Heart right ventricle (tissue), 16 donors: ENCODE measurements at regions of chr11 and their contacts with region 1.

Region 1: DNA sequence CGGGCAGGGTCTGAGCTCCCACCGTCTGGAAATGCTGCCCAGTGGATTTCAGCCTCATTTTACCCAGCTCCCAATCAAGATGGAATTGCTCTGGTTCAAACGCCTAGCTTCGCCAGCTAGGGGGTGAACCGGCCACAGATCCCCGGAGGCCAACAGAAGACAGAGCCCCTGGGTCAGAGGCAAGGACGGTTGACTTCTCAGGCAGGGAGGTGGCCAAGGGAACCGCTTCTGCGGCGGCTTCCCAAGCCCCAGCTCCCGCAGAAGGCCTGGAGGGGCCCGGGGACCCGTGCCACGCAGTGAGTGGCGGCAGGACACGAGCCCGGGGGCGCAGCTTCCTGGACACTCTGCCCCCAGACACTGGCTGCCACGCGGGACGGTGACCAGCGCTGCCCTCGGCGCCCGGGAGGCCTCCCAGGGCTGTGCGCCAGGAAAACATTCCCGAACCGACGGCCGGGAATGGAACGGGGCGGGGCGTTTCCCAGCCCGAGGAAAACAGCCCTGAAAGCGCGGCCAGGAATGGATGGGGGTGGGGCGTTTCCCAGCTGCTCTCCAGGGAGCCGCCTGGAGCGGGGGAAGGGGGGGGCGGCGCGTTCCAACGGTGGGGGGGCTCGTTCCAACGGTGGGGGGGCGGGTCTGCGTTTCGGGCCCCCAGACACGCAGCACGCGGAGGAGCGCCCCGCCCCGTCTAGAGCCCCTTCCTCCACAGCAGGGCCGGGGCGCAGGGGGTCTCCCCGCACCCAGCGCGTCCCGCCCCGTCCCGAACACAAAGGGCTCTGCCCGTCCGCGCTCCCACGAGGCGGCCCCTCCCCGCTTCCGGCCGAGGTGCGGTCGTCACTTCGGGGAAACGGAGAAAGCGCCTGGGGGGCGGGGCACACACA is 13.5 kb upstream of the B4GALNT4 start:
- DNase-seq: peak; percentile 95 to 97
- ATAC-seq: peak; percentile 86 to 95 (median 92)
- H3K4me3 ChIP-seq: peak overlapping the region in 9 of 10 donors; percentile 28 to 52 (median 47)
- H3K27ac ChIP-seq: peak overlapping the region; percentile 93 to 100 (median 98)
- H3K4me1 ChIP-seq: peaks cover 5 to 45% (median 35%) of the 10 kb centered on the region in 9 donors
- H3K27me3 ChIP-seq: no peaks in the 10 kb centered on the region
- CTCF ChIP-seq: no peak

Region 2: DNA sequence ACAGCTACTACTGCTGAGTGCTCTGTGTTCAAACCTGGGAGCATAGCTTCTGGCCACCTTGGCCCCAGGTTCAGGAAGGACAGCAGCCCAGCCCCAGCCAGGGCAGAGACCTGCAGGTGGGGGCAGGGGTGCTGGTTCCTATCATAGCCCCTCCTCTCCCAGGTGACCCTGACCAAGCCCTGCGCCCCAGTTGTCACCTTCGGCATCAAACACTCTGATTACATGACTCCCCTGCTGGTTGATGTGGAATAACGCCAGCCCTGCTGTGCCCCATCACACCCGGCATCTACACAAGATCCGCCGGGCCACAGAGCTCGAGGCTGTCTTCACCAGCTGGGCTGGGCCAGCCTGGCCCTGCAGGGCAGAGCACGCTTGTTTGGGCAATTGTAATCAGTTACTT is 156.0 kb before region 1 on chr11:
- intact Hi-C with region 1: loop called in 3 of 10 experiments (anchors 5 to 10 kb)
- DNase-seq: no peak
- ATAC-seq: peak in 1 of 8 donors; percentile 21
- H3K4me3 ChIP-seq: no peak overlapping the region
- H3K27ac ChIP-seq: no peak overlapping the region
- H3K4me1 ChIP-seq: peaks cover 0 to 33% (median 5%) of the 10 kb centered on the region in 9 donors
- H3K27me3 ChIP-seq: no peaks in the 10 kb centered on the region
- CTCF ChIP-seq: no peak

Region 3: DNA sequence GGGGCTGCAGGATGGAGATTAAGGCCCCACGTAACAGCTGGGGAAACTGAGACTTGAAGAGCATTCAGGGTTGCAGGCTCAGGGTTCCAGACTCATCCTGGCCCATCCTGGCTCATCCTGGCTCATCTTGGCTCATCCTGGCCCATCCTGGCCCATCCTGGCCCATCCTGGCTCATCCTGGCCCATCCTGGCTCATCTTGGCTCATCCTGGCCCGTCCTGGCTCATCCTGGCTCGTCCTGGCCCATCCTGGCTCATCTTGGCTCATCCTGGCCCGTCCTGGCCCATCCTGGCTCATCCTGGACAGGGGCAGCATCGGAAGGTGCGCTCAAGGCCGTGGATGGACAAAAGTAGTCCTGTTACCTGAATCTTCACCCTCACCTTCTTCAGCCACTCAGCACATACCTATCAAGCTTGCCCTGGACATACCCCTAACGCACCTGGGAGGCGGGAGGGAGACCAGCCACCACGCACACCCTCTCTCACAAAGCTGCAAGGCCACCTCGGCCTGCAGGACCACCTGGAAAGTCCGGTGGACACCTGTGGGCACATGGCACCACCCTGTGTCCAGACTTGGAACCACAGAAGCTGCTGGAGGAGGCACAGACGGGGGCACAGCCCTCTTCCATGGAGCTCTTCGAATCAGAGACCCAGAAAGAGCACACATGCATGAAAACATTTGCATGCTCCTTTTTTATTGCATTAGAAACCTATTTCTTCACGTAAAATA is 97.9 kb before region 1 on chr11:
- intact Hi-C with region 1: loop called in 3 of 10 experiments (anchors 5 to 10 kb)
- DNase-seq: no peak
- ATAC-seq: peak in 1 of 8 donors; percentile 42
- H3K4me3 ChIP-seq: no peak overlapping the region
- H3K27ac ChIP-seq: no peak overlapping the region
- H3K4me1 ChIP-seq: no peaks in the 10 kb centered on the region
- H3K27me3 ChIP-seq: peaks cover 0 to 10% (median 0%) of the 10 kb centered on the region in 7 donors
- CTCF ChIP-seq: peak in 2 of 9 donors; percentile 14 to 20

Region 4: DNA sequence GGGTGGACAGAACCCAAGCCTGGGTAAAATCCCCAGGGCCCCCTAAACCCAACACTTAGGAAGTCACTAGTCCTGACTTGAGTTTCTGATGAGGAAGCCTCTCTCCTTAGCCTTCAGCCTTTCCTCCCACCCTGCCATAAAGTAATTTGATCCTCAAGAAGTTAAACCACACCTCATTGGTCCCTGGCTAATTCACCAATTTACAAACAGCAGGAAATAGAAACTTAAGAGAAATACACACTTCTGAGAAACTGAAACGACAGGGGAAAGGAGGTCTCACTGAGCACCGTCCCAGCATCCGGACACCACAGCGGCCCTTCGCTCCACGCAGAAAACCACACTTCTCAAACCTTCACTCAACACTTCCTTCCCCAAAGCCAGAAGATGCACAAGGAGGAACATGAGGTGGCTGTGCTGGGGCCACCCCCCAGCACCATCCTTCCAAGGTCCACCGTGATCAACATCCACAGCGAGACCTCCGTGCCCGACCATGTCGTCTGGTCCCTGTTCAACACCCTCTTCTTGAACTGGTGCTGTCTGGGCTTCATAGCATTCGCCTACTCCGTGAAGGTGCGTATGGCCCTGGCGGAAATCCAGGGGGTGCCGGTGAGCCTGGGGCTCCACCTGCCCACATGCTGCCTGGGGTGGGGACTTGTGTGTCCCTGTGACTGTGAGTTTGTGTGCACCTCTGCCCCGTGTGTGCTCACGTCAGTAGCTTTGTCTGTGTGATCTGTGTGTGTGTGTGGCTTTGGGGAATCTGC is 41.9 kb before region 1 on chr11 and contains the start of gene IFITM1:
- intact Hi-C with region 1: loop called in 7 of 10 experiments (anchors 2 to 10 kb)
- DNase-seq: peak; percentile 22 to 65
- ATAC-seq: peak; percentile 5 to 51 (median 29)
- H3K4me3 ChIP-seq: peak within 1 kb of the TSS; percentile 55 to 85 (median 75)
- H3K27ac ChIP-seq: peak within 1 kb of the TSS; percentile 83 to 99 (median 94)
- H3K4me1 ChIP-seq: peaks cover 6 to 60% (median 40%) of the 10 kb centered on the region in 9 donors
- H3K27me3 ChIP-seq: peaks cover 0 to 25% (median 12%) of the 10 kb centered on the region in 7 donors
- CTCF ChIP-seq: no peak
- total RNA-seq, gene IFITM1: 51.6 to 182 (median 94.9) TPM

Region 5: DNA sequence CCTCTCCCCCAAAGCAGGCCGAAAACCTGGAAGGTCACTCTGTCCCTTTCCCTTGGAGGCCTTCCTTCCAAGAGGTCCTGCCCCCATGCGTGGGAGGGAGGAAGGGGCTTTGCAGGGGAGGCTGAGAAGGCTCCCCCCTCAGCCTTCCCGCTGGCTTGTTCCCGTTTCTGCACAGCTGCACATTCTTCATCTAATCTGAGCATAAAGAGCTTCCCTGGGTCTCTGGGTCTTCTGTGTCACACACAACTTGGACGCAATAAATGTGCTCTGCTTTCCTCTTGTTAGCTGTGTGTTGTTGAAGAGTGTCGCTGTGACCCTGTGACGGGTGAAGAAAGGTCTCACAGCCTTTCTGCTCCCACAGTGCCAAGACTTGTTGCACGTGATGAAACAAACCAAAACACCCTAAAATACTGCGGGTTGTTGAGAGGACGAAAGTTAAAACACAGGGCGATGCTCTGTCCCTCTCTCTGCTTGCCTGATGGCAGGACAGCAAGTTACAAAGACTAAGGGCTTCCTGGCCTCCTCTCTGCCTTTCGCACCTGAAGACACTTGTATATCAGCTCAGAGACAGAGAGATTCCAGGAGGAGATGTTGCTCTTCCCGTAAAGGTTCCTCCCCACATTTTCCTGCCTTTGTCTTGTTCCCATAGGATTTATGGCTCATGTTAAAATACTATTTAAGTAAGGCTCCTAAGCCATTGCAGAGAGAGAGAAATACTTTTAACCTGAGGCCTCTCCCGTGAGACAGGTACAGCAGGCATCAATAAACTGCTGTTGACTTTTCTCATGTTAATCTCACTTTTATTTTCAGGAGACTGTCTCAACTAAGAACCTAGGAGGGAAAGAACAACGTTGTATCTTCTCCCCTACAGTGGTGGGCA is 19.8 kb before region 1 on chr11:
- intact Hi-C with region 1: loop called in 1 of 10 experiments (anchors 2 kb)
- DNase-seq: peak in 1 of 2 donors; percentile 73
- ATAC-seq: peak; percentile 50 to 86 (median 78)
- H3K4me3 ChIP-seq: no peak overlapping the region
- H3K27ac ChIP-seq: peak overlapping the region; percentile 69 to 90 (median 84)
- H3K4me1 ChIP-seq: peaks cover 7 to 44% (median 31%) of the 10 kb centered on the region in 9 donors
- H3K27me3 ChIP-seq: no peaks in the 10 kb centered on the region
- CTCF ChIP-seq: no peak

Region 6: DNA sequence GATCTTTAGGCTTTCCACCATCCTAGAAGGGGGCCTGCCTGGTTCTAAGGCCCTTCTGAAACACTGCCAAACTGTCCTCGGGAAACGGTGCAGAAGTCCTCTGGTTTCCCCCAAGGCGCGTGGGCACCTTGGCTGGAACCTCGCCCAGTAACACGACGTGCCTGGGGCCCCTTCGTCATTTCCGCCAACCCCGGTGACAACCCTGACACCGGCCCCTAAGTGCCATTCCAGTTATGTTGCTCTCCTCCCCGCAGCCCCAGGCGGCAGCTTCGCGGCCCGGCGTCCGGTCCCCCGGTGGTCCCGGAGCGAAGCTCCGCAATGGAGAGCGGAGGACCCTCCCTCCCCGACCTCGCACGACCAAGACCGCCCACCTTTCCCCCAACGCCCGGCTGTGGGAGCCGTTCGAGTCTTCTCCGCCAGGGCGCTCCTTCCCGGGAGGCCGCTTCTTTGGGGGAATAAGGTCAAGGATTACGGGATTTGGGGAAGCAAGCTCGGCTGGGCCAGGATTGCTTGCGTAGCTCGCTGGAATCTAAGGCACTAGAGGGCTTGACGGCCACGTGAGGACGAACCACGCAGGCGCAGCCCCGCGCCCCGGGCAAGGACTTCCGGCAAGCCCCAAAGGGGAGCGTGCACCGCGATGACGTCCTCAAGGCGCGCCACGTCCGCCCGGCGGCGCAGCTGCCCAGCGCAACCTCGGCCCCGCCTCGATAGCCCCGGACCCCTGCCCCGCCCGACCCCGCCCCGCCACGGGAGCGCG is 150.6 kb after region 1 on chr11:
- intact Hi-C with region 1: no loop called
- DNase-seq: peak; percentile 98 to 100
- ATAC-seq: peak; percentile 80 to 92 (median 90)
- H3K4me3 ChIP-seq: peak overlapping the region; percentile 71 to 98 (median 85)
- H3K27ac ChIP-seq: peak overlapping the region; percentile 95 to 100 (median 99)
- H3K4me1 ChIP-seq: peaks cover 24 to 58% (median 51%) of the 10 kb centered on the region in 9 donors
- H3K27me3 ChIP-seq: no peaks in the 10 kb centered on the region
- CTCF ChIP-seq: peak in 1 of 9 donors; percentile 23

Region 7: GRCh38 chr11:587978-588380 is 232.2 kb after region 1 on chr11:
- intact Hi-C with region 1: no loop called
- DNase-seq: no peak
- ATAC-seq: peak in 2 of 8 donors; percentile 21 to 82
- H3K4me3 ChIP-seq: peak overlapping the region in 1 of 10 donors; percentile 14
- H3K27ac ChIP-seq: peak overlapping the region in 1 of 10 donors; percentile 84
- H3K4me1 ChIP-seq: peaks cover 0 to 20% (median 0%) of the 10 kb centered on the region in 9 donors
- H3K27me3 ChIP-seq: no peaks in the 10 kb centered on the region
- CTCF ChIP-seq: no peak